ENCODE measurements at regions of chr2 and their contacts with region 1.

Region 1: DNA sequence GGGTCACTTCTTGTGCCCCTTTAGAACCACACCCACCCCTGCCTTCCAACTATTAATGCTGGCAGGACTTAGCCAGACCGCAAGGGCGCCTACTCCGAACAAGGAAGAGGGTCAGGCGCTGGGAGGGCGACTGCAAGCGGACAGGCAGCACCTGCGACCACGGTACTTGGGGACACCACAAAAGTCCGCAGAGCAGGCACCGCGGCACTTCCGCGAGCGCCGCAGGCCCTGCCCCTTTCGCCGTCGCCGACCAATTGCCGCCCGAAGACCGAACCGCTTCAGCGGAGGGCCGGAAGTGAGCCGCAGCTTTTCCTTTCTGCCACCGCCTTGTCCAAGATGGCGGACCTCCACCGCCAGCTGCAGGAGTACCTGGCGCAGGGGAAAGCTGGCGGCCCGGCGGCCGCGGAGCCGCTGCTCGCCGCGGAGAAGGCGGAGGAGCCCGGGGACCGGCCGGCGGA is at the start of gene SFT2D3:
- DNase-seq: peak; percentile 95
- H3K4me3 ChIP-seq: peak within 1 kb of the TSS; percentile 69
- H3K27ac ChIP-seq: peak within 1 kb of the TSS; percentile 66
- H3K4me1 ChIP-seq: peaks cover 31% of the 10 kb centered on the region
- CTCF ChIP-seq: no peak
- total RNA-seq, gene SFT2D3: 11.0 and 14.3 TPM in 2 replicates

Region 2: GRCh38 chr2:127526149-127527000 is 174.8 kb before region 1 on chr2 and contains the start of gene IWS1:
- CTCF ChIA-PET with region 1: no interaction called
- POLR2A ChIA-PET with region 1: no interaction called
- intact Hi-C with region 1: loop called (anchors 1 kb)
- DNase-seq: peak; percentile 97
- H3K4me3 ChIP-seq: peak within 1 kb of the TSS; percentile 82
- H3K27ac ChIP-seq: peak within 1 kb of the TSS; percentile 85
- H3K4me1 ChIP-seq: peaks cover 26% of the 10 kb centered on the region
- CTCF ChIP-seq: peak; percentile 60; the same call in 1 of the 2 replicates
- total RNA-seq, gene IWS1: 49.2 and 70.4 TPM in 2 replicates

Region 3: DNA sequence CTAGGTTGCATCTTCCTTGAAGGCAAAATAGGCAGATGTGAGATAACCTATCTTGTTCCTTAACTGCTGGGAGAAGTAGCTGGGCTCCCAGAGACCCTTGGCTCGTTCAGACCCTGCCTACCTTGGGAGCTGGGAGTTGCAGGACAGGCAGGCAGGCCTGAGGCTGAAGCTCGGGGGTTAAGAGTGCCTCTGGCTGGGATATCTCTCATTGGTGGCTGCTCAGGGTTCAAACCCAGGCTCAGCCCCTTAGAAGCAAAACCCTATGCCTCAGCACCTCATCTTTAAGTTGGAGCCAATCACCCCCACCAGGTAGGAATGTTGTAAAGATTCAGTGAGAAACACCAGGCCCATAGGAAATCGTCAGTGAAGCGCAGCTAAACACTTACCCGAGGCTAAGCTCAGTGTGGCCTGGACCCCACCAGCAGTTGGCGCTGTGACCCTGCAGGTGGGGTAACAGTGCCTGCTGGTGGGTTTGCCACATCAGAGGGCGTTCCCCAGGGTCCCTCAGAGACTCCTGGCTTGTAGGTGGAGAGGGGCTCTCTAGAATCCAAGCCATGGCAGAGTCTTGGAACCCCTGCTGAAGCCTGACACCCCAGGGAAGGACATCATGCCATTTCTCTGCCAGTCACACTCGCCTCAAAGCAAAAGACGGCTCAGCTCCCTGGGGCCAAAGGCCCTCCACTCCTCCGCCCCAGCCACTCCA is 109.8 kb before region 1 on chr2:
- CTCF ChIA-PET with region 1: no interaction called
- POLR2A ChIA-PET with region 1: no interaction called
- intact Hi-C with region 1: loop called (anchors 5 kb)
- DNase-seq: peak; percentile 74
- H3K4me3 ChIP-seq: no peak overlapping the region
- H3K27ac ChIP-seq: no peak overlapping the region
- H3K4me1 ChIP-seq: no peaks in the 10 kb centered on the region
- CTCF ChIP-seq: peak; percentile 96

Region 4: GRCh38 chr2:127810619-127811396 is 109.6 kb after region 1 on chr2 and contains the start of gene WDR33:
- CTCF ChIA-PET with region 1: no interaction called
- POLR2A ChIA-PET with region 1: interaction called, 3 read pairs
- intact Hi-C with region 1: loop called (anchors 2 kb)
- DNase-seq: peak; percentile 98
- H3K4me3 ChIP-seq: peak within 1 kb of the TSS; percentile 91
- H3K27ac ChIP-seq: peak within 1 kb of the TSS; percentile 84
- H3K4me1 ChIP-seq: peaks cover 53% of the 10 kb centered on the region
- CTCF ChIP-seq: peak; percentile 44; the same call in 1 of the 2 replicates
- total RNA-seq, gene WDR33: 60.6 and 70.7 TPM in 2 replicates

Region 5: DNA sequence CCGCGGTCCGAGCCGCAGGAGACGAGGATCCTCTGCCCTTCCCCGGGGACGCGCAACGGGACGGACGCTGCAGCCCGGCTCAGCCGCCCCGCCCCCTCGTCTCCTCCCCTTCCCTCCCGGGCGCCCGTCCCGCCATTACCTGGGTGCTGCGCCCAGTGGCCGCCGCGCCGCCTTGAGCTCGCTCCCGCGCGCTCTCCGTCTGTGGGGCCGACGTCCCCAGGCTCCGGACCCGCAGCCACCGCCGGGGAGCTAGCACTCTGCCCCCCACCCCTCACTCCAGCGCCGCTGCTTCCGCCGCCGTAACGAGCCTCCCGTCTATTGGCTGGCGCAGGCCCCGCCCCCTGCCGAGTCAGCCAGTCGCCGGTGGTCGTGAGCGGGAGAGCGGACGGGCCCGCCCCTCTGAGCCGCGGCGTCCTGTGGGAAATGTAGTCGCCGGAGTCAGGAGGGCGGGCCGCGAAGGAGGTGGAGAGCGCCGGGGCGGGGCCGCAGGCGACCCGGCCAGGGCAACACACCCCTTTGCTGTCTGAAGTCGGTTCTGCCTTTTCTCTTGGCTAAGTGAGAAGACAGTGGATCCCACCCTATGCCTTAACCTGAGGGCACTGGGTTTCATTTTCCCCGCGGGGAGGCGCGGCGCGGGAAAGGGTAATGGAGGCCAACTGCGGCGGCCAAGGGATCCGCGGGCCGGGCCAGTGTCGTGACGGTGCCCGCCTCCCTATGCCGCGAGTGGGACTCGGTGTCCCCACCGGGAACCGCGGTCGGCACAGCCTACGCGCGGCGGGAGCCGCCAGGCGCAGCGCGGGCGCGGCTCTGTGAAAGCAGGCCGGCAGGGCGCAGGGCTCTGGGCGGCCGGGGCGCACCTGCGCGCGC is 326.8 kb after region 1 on chr2 and contains the start of gene SAP130:
- CTCF ChIA-PET with region 1: no interaction called
- POLR2A ChIA-PET with region 1: no interaction called
- intact Hi-C with region 1: loop called (anchors 1 kb)
- DNase-seq: peak; percentile 97
- H3K4me3 ChIP-seq: peak within 1 kb of the TSS; percentile 93
- H3K27ac ChIP-seq: peak within 1 kb of the TSS; percentile 70
- H3K4me1 ChIP-seq: peaks cover 11% of the 10 kb centered on the region
- CTCF ChIP-seq: 0 out of 2 replicates have a peak, but pooled peaks have one; percentile 21
- total RNA-seq, gene SAP130: 6.7 and 9.6 TPM in 2 replicates